Activated CD4-positive, alpha-beta T cell treated with anti-CD3 and anti-CD28 coated beads, Interleukin-2, amount 10 ng/mL, durations not matched to agents 24 days and 14 days (primary cell): ENCODE measurements at regions of chr17 and their contacts with region 1.

Region 1: GRCh38 chr17:49556223-49556971 is 19.3 kb upstream of the NXPH3 start:
- DNase-seq: peak; percentile 96
- H3K4me3 Mint-ChIP-seq: no peak overlapping the region
- H3K27ac Mint-ChIP-seq: no peak overlapping the region
- H3K4me1 Mint-ChIP-seq: peaks cover 7% of the 10 kb centered on the region
- H3K27me3 Mint-ChIP-seq: peaks cover 15% of the 10 kb centered on the region

Region 2: DNA sequence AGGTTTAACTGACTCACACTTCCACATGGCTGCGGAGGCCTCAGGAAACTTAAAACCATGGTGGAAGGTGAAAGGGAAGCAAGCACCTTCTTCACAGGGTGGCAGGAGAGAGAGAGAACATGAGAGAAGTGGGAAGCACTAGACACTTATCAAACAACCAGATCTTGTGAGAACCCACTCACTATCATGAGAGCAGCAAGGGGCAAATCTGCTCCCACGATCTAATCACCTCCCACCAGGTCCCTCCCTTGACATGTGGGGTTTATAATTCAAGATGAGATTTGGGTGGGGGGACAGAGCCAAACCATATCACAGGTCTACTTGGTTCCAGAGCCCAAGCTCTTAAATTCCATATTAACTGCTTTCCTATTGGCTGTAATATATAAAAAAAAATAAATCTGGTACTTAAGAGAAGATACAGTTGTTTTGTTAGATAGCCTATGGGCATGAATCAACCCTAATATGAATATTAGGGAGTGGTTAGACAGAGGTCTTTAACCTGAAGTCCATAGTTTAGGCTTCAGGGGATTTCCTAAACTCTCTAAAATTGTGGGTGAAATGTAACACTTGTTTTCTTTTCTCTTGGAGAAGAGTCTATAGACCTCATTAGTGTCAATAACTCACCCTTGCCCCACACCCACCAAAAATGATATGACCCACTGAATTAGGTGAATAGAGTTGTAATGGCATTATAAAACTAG is 1183.1 kb before region 1 on chr17:
- intact Hi-C with region 1: no loop called
- DNase-seq: no peak
- H3K4me3 Mint-ChIP-seq: no peak overlapping the region
- H3K27ac Mint-ChIP-seq: peak overlapping the region; percentile 72
- H3K4me1 Mint-ChIP-seq: peaks cover 20% of the 10 kb centered on the region
- H3K27me3 Mint-ChIP-seq: no peaks in the 10 kb centered on the region

Region 3: GRCh38 chr17:49407981-49408501 is 148.4 kb before region 1 on chr17:
- intact Hi-C with region 1: loop called (anchors 1 kb)
- DNase-seq: peak; percentile 95
- H3K4me3 Mint-ChIP-seq: no peak overlapping the region
- H3K27ac Mint-ChIP-seq: no peak overlapping the region
- H3K4me1 Mint-ChIP-seq: peaks cover 22% of the 10 kb centered on the region
- H3K27me3 Mint-ChIP-seq: no peaks in the 10 kb centered on the region

Region 4: GRCh38 chr17:49434821-49435670 is 121.4 kb before region 1 on chr17:
- intact Hi-C with region 1: loop called (anchors 1 kb)
- DNase-seq: peak; percentile 81
- H3K4me3 Mint-ChIP-seq: no peak overlapping the region
- H3K27ac Mint-ChIP-seq: no peak overlapping the region
- H3K4me1 Mint-ChIP-seq: no peaks in the 10 kb centered on the region
- H3K27me3 Mint-ChIP-seq: peaks cover 33% of the 10 kb centered on the region

Region 5: DNA sequence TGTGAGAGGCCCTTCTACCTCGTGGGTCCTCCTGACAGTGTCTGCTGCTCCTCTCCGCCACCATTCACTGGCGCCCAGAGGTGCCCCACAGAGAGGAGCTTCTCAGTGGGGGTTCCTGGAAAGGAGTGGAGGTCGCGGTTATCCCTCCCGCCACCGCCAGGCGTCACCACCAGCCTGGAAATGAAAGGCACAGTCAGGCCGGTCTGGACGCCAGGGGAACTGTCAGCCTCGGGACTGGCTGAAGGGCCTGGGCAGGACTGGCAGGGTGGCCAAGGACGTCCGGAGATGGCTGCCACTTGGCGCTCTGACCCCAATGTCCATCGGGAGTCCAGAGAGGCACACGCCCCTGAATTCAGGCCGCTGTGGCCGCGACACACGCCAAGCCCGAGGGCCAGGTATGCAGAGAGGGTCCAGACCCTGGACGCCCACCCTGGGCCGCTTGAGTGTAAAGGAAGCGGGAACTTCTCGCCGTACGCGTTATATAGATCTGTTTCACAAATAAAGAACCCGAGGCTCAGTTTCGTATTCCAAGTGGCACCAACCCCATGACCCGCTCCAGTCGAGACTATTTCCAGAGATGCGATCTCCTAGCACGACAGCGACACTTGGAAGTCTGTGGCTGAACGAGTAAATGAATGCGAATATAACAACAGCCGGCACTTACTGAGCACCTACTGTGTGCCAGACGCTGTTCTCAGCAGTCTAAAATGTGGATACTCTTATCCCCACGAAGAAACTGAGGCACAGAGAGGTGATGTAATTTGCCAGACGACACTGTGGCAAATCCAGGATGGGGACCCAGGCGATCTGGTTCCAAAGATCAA is 11.7 kb after region 1 on chr17:
- intact Hi-C with region 1: no loop called
- DNase-seq: peak; percentile 95
- H3K4me3 Mint-ChIP-seq: peak overlapping the region; percentile 70
- H3K27ac Mint-ChIP-seq: no peak overlapping the region
- H3K4me1 Mint-ChIP-seq: peaks cover 32% of the 10 kb centered on the region
- H3K27me3 Mint-ChIP-seq: peaks cover 35% of the 10 kb centered on the region